AG04449 (cell line): ENCODE measurements at regions of chr7 and their contacts with region 1.

Region 1: GRCh38 chr7:42222891-42223290 is 14.1 kb downstream of the GLI3 start:
- DNase-seq: no peak
- H3K4me3 ChIP-seq: no peak overlapping the region
- CTCF ChIP-seq: no peak

Region 2: GRCh38 chr7:42233695-42234331 is 10.9 kb after region 1 on chr7:
- CTCF ChIA-PET with region 1: interaction called, 10 read pairs
- POLR2A ChIA-PET with region 1: no interaction called
- DNase-seq: no peak
- H3K4me3 ChIP-seq: no peak overlapping the region
- CTCF ChIP-seq: no peak

Region 3: DNA sequence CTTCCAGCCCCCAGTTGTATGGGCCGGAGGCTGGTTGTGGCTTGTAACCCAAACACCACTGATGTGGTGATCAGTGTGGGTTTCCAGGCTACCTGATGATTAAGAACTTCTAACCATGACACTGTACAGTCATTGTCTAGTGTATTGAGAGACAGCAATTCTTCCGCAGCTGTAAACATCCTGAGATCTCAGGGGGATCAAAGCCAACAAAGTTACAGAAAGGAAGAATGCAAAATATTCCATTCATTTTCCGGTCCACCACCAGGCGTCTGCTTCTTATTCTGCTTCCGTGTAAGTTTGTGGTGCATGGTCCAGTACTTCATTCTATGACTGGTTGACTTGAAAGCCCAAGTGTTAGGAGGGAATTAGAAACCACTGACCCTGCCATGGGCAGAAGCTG is 24.4 kb after region 1 on chr7:
- CTCF ChIA-PET with region 1: no interaction called
- POLR2A ChIA-PET with region 1: no interaction called
- DNase-seq: no peak
- H3K4me3 ChIP-seq: no peak overlapping the region
- CTCF ChIP-seq: peak; percentile 32